ENCODE measurements at regions of chr9 and their contacts with region 1.

Region 1: GRCh38 chr9:27333241-27334052 is 36.5 kb upstream of the EQTN start:
- DNase-seq: peak; percentile 78 to 87 (median 79)
- H3K4me3 ChIP-seq: no peak overlapping the region
- H3K27ac ChIP-seq: no peak overlapping the region
- H3K4me1 ChIP-seq: peaks cover 0 to 9% (median 3%) of the 10 kb centered on the region in 4 experiments
- H3K27me3 ChIP-seq: no peaks in the 10 kb centered on the region

Region 2: DNA sequence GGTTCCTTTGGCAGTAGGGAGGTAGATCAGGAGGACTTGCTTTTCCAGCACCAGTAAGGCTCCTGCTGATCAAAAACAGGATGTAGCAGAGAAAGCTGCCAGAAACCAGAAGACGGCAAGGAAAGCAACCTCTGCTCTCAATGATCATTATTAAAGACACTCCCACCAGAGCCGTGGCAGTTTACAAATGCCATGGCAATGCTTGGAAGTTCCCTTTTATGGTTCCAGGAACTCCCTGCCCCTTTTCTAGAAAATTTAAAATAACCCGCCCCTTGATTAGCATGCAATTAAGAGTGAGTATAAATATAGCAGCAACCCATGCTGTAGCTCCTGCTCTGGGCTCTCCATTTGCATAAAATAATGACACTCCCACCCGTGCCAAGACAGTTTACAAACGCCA is 52.6 kb before region 1 on chr9:
- CTCF ChIA-PET with region 1: no interaction called
- POLR2A ChIA-PET with region 1: no interaction called
- DNase-seq: peak; percentile 43 to 88 (median 83)
- H3K4me3 ChIP-seq: peak overlapping the region in 2 of 7 experiments; percentile 45 to 67
- H3K27ac ChIP-seq: no peak overlapping the region
- H3K4me1 ChIP-seq: peaks cover 0 to 26% (median 5%) of the 10 kb centered on the region in 4 experiments
- H3K27me3 ChIP-seq: no peaks in the 10 kb centered on the region

Region 3: GRCh38 chr9:27303219-27303618 is 30.2 kb before region 1 on chr9:
- CTCF ChIA-PET with region 1: no interaction called
- POLR2A ChIA-PET with region 1: no interaction called
- DNase-seq: no peak
- H3K4me3 ChIP-seq: no peak overlapping the region
- H3K27ac ChIP-seq: no peak overlapping the region
- H3K4me1 ChIP-seq: no peaks in the 10 kb centered on the region
- H3K27me3 ChIP-seq: no peaks in the 10 kb centered on the region

Region 4: DNA sequence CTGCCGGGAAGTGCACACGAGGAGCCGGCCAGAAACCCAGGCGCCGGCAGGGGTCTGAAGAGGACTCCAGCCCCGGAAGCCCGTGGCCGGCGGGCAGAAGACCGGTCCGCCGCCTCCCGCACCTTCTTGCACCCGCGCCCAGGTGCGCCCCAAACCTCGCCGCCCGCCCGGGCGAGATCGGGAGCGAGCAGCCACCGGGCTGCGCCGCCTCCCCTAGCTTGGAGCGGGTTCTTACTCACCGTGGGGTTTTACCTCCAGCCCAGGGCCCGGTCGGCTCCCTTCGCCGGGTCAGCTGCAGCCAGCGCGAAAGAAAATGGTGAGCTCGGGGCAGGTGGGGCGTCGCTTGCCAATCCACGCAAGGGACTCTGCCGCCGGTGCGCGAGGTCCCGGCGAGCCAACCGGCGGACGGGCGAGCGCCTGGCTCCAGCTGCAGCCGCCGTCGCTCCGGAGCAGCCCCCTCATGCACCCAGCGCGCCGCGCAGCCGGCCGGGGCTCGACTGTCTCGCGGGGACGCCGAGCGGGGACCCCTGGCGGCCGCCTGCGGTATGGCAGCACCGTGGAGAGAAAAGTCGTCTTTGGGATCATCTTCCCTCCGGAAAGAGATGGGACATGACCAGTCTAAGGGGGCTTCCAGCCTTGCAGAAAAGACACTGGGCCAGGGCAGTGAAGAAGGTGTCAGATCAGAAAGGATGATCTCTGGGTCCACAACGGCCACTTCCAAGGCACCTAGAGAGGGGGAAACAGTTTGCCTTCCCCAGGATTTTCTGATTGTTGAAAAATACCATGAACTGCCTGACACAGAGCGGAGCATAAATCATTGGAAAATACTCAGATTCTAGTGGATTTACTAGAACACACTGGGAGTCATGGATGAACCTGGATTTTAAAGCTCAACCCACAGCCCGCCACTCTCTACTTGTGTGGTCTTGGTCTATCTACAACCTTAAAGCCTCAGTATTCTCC is 196.2 kb after region 1 on chr9 and contains the start of gene MOB3B:
- CTCF ChIA-PET with region 1: interaction called, 131 read pairs
- POLR2A ChIA-PET with region 1: interaction called, 3 read pairs
- DNase-seq: peak; percentile 72 to 87 (median 80)
- H3K4me3 ChIP-seq: peak within 1 kb of the TSS; percentile 56 to 88 (median 78)
- H3K27ac ChIP-seq: peak within 1 kb of the TSS in 1 of 2 experiments; percentile 45
- H3K4me1 ChIP-seq: peaks cover 0 to 20% (median 15%) of the 10 kb centered on the region in 4 experiments
- H3K27me3 ChIP-seq: peaks cover 0 to 10% (median 2%) of the 10 kb centered on the region in 5 experiments